ENCODE measurements at regions of chr2 and their contacts with region 1.

Region 1: DNA sequence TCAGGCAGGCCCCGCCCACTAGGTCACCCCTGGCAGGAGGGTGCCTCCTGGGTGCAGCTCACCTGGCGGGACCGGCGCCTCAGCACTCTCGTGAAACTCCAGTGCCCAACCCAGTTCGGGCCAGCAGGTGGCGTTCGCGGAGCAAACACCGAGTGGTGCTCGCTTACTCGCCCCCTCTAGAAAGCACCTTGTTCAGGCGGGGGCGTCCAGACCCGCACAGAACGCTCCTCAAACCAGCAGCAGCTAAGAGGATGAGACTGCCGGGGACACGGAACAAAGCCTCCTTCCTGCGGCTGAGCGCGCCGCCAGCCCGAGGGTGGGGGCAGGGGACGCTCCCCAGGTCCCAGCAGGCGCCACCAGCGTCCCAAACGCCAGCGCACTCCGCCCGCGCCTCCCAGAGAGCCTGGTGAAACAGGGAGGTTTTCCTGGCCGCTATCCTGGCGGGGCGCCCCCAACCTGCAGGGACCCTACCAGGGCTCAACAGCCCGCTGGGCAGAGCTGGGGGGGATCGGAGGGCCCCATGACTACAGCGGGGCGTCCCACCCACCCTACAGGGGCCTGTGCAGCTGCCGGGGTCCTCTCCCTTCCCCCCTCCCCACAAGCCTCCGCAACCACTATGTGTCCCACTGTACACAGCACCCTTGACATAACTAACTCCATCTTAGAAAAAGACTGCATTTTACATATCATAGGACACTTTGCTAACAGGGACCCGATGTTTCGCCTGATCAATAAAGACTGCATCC is 44.7 kb downstream of the MRPS5 start:
- DNase-seq: peak; percentile 95
- ATAC-seq: peak; percentile 77
- H3K4me3 Mint-ChIP-seq: peak overlapping the region; percentile 84
- H3K27ac Mint-ChIP-seq: peak overlapping the region; percentile 95
- H3K4me1 Mint-ChIP-seq: peaks cover 76% of the 10 kb centered on the region
- H3K27me3 Mint-ChIP-seq: no peaks in the 10 kb centered on the region

Region 2: GRCh38 chr2:94986392-94986963 is 90.5 kb before region 1 on chr2:
- CTCF ChIA-PET with region 1: interaction called, 17 read pairs
- POLR2A ChIA-PET with region 1: no interaction called
- DNase-seq: peak; percentile 67
- ATAC-seq: peak; percentile 79
- H3K4me3 Mint-ChIP-seq: no peak overlapping the region
- H3K27ac Mint-ChIP-seq: no peak overlapping the region
- H3K4me1 Mint-ChIP-seq: peaks cover 6% of the 10 kb centered on the region
- H3K27me3 Mint-ChIP-seq: peaks cover 10% of the 10 kb centered on the region

Region 3: DNA sequence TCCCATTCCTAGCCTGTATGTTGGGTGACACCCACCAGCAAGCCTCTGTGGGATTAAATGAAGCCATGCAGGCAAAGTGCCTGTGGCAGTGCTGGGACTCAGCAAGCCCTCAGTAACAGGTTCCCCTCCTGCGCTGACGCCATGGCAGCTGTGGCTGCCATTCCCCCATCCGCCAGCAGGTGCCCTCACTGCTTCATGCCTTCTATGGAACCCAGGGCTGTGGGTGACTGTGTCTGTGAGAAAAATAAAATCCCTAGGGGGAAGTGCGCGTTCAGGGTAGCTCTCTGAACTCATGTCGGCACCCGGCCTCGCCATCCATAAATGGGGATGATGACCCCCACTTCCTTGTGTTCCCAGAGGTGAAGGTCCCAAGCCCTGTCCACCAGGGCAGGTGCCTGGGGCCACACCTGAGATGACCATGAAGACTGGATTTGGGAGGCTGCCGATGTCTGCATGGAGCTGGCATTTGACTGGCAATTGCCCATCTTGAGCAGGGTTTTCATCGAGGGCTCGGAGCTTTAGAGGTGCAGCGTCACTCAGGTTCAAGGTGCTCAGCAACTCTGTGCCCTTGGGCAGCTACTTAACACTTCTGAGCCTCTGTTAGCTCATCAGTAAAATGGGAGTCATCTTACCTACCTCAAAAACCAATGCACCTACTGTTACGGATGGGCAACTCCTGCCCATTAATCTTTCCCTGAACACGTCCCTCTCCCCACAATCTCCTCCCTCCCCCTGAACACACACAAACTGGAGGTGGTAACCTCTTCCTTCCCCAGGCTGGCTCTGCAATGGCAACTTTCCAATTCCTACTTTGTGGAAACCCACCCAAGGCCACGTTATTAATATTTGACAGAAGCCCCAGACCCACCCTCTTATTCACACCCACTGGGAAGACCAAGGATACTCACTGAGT is 54.4 kb before region 1 on chr2:
- CTCF ChIA-PET with region 1: interaction called, 693 read pairs
- POLR2A ChIA-PET with region 1: interaction called, 255 read pairs
- DNase-seq: peak; percentile 92
- ATAC-seq: peak; percentile 55
- H3K4me3 Mint-ChIP-seq: peak overlapping the region; percentile 81
- H3K27ac Mint-ChIP-seq: peak overlapping the region; percentile 82
- H3K4me1 Mint-ChIP-seq: peaks cover 58% of the 10 kb centered on the region
- H3K27me3 Mint-ChIP-seq: no peaks in the 10 kb centered on the region

Region 4: GRCh38 chr2:95043300-95044093 is 33.5 kb before region 1 on chr2:
- CTCF ChIA-PET with region 1: interaction called, 21 read pairs
- POLR2A ChIA-PET with region 1: interaction called, 3 read pairs
- DNase-seq: no peak
- ATAC-seq: no peak
- H3K4me3 Mint-ChIP-seq: no peak overlapping the region
- H3K27ac Mint-ChIP-seq: peak overlapping the region; percentile 44
- H3K4me1 Mint-ChIP-seq: peaks cover 72% of the 10 kb centered on the region
- H3K27me3 Mint-ChIP-seq: no peaks in the 10 kb centered on the region

Region 5: DNA sequence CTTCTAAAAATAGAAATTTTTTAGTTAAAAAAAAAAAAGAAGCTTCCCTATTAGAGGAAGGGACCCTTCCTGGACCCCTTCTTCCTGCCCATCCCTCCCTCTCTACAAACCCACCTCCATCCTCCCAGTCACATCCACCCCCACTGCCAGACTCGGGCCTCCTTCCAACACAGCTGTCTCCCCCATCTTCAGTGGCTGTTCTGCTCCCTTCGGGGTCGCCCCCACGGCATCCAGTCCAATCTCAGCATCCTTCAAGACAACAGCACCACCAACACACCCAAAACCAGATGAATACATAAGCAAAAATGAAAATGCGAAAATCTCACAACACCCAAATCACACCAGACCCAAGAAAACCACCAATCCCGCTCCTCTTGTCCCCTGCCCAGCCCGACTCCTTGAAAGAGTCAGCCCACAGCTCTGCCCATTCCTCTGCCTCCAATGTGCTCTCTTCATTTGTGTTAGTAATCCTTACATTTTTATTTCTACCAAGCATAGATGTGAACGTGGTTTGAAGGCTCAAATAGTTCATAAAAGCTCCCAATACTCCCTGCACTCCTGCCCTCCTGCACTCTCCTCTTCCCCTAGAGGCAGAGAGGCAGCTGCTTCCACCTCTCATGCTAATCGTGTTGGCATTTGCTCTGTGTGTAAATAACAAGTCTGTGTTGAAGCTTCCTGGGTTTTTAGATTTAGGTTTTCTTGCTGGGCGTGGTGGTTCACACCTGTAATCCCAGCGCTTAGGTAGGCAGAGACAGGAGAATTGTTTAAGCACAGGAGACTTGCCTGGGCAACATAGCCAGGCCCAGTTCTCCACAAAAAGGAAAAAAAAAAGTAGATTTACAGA is 14.5 kb before region 1 on chr2:
- CTCF ChIA-PET with region 1: interaction called, 126 read pairs
- POLR2A ChIA-PET with region 1: interaction called, 45 read pairs
- DNase-seq: no peak
- ATAC-seq: peak; percentile 57
- H3K4me3 Mint-ChIP-seq: peak overlapping the region; percentile 11
- H3K27ac Mint-ChIP-seq: peak overlapping the region; percentile 89
- H3K4me1 Mint-ChIP-seq: peaks cover 37% of the 10 kb centered on the region
- H3K27me3 Mint-ChIP-seq: no peaks in the 10 kb centered on the region

Region 6: GRCh38 chr2:95106081-95106480 is 29.1 kb after region 1 on chr2:
- CTCF ChIA-PET with region 1: interaction called, 11 read pairs
- POLR2A ChIA-PET with region 1: interaction called, 3 read pairs
- DNase-seq: no peak
- ATAC-seq: no peak
- H3K4me3 Mint-ChIP-seq: no peak overlapping the region
- H3K27ac Mint-ChIP-seq: no peak overlapping the region
- H3K4me1 Mint-ChIP-seq: no peaks in the 10 kb centered on the region
- H3K27me3 Mint-ChIP-seq: no peaks in the 10 kb centered on the region

Region 7: GRCh38 chr2:95121407-95122196 is 44.6 kb after region 1 on chr2 and contains the start of gene MRPS5:
- CTCF ChIA-PET with region 1: interaction called, 178 read pairs
- POLR2A ChIA-PET with region 1: interaction called, 15 read pairs
- DNase-seq: peak; percentile 87
- ATAC-seq: peak; percentile 97
- H3K4me3 Mint-ChIP-seq: peak within 1 kb of the TSS; percentile 96
- H3K27ac Mint-ChIP-seq: peak within 1 kb of the TSS; percentile 96
- H3K4me1 Mint-ChIP-seq: peaks cover 43% of the 10 kb centered on the region
- H3K27me3 Mint-ChIP-seq: peaks cover 3% of the 10 kb centered on the region
- total RNA-seq, gene MRPS5: 79.8 to 83.3 TPM

Region 8: DNA sequence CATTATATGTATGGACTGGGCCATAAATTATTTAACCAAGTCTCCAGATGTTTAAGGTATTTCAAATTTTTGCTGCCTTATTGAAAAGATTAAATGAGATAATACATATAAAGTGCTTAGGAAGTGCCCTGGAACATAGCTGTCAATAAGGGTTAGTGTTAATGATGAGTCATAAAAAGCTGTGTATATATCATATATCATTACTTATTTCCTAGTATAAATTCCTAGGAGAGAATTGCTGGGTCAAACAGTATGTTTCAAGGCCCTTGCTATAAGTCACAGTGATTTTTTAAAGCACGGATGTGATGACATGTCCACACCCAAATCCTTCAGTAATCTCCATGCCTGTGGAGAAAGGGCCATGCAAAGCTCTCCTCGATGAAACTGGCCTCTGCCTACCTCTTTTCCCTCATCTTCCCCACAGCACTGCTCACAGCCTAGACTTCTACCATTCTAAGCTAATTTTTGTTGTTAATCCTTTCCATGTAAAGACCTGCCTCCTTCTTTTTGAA is 97.1 kb after region 1 on chr2:
- CTCF ChIA-PET with region 1: no interaction called
- POLR2A ChIA-PET with region 1: no interaction called
- DNase-seq: no peak
- ATAC-seq: no peak
- H3K4me3 Mint-ChIP-seq: no peak overlapping the region
- H3K27ac Mint-ChIP-seq: no peak overlapping the region
- H3K4me1 Mint-ChIP-seq: no peaks in the 10 kb centered on the region
- H3K27me3 Mint-ChIP-seq: no peaks in the 10 kb centered on the region

Measured in activated CD8-positive, alpha-beta T cell treated with anti-CD3 and anti-CD28 coated beads, Interleukin-2, amount 10 ng/mL, durations not matched to agents 7 days and 5 days (primary cell).